H1 (cell line): ENCODE measurements at regions of chr17 and their contacts with region 1.

Region 1: GRCh38 chr17:16477255-16477654 is 14.7 kb downstream of the LRRC75A start:
- DNase-seq: no peak
- H3K4me3 ChIP-seq: no peak overlapping the region
- H3K27ac ChIP-seq: no peak overlapping the region
- H3K4me1 ChIP-seq: peaks cover 0 to 33% (median 9%) of the 10 kb centered on the region in 4 experiments; a peak in 5 of 7 replicates
- H3K27me3 ChIP-seq: no peaks in the 10 kb centered on the region
- CTCF ChIP-seq: no peak
- EP300 ChIP-seq: no peak
- POLR2A ChIP-seq: no peak
- RAD21 ChIP-seq: no peak

Region 2: GRCh38 chr17:16456742-16457316 is 20.4 kb before region 1 on chr17:
- CTCF ChIA-PET with region 1: interaction called, 124 read pairs
- POLR2A ChIA-PET with region 1: interaction called, 4 read pairs
- DNase-seq: no peak
- H3K4me3 ChIP-seq: no peak overlapping the region
- H3K27ac ChIP-seq: no peak overlapping the region
- H3K4me1 ChIP-seq: peaks cover 6 to 16% (median 12%) of the 10 kb centered on the region in 4 experiments
- H3K27me3 ChIP-seq: no peaks in the 10 kb centered on the region
- CTCF ChIP-seq: peak; percentile 37 to 42 (median 37)
- EP300 ChIP-seq: no peak
- POLR2A ChIP-seq: no peak
- RAD21 ChIP-seq: peak; percentile 53 to 65

Region 3: DNA sequence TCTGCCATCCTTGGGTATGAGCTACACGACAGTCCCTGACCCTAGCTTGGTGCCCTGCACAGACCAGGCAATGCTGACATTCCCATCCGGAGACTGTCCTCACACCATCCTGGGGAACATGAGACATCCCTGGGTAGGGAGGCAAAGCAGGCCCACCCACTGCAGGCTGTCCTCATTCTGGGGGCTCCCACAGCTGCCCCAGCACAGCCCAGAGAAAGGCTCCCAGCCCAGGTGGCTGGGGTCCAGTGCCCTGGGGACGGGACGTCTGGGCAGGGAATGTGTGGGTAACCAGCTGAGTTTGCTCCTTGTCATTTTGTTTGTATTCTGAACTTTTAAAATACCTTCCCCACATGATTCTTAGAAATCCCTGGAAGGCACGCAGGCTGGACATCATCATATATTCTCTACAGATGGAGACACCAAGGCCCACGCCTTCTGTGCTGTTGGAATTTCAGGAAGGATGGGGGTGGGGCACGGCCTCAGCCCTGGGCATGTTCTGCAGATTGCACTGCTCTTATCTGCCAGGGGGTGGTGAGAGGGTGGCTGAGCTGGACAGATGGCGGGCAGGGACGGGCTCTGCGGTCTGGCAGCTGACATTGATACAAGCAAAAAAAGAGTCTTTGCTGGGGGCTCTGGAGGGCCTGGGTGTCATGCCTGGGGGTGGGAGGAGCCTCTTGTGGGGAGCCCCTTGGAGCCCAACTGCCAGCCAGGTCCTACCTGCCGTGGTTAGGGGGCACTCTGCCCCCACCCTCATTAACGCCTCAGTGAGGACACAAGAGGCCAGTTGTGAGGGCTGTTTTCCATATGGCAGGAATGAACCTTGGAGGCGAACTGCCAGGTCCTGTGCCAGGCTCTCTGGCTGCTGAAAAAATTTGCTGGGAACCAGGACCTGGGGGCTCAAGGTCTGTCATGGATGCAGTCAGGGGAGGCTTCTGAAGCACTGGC is 13.6 kb before region 1 on chr17:
- CTCF ChIA-PET with region 1: interaction called, 30 read pairs
- POLR2A ChIA-PET with region 1: interaction called, 7 read pairs
- DNase-seq: no peak
- H3K4me3 ChIP-seq: no peak overlapping the region
- H3K27ac ChIP-seq: no peak overlapping the region
- H3K4me1 ChIP-seq: peaks cover 6 to 26% (median 10%) of the 10 kb centered on the region in 4 experiments
- H3K27me3 ChIP-seq: no peaks in the 10 kb centered on the region
- CTCF ChIP-seq: peak; percentile 40 to 60 (median 43); a peak in 3 of 4 replicates
- EP300 ChIP-seq: no peak
- POLR2A ChIP-seq: no peak
- RAD21 ChIP-seq: peak; percentile 24 to 52; a peak in 2 of 4 replicates

Region 4: DNA sequence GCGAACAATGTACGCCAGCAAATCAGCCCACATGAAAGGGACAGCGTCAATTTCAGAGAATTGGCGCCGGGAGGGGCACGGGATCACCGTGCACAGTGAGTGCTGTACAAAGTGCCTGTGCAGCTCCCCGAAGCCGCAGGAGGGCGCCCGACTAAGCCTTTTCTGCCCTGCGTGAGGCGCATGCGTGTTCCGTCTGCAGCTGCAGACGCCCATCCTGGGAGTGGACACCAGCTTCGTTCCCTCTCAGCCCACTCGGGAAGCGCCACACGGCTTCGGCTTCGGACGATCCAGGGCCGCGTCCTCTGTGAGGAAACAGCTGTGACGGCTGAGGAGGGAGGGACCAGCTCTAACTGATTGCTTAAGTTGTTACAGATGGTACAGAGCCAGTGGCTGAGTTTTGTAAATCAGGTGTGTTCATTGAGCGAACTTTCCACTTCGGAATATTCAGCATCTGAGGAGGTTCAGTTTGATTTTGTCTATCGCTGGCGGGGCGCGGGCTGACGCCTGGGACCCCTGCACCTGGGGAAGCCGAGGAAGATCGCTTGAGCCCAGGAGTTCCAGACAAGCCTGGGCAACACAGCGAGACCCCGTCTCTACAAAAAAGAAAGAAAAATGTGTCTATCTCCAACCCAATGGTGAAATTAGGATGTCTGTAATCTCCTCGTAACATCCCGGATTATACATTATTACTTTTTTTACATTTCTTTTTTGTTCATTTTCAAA is 107.2 kb after region 1 on chr17:
- CTCF ChIA-PET with region 1: no interaction called
- POLR2A ChIA-PET with region 1: no interaction called
- DNase-seq: peak; percentile 60 to 96
- H3K4me3 ChIP-seq: peak overlapping the region; percentile 21 to 58 (median 45); a peak in 6 of 8 replicates
- H3K27ac ChIP-seq: no peak overlapping the region
- H3K4me1 ChIP-seq: no peaks in the 10 kb centered on the region
- H3K27me3 ChIP-seq: peaks cover 2 to 15% (median 10%) of the 10 kb centered on the region in 4 experiments
- CTCF ChIP-seq: peak; percentile 93 to 98 (median 96)
- EP300 ChIP-seq: no peak
- POLR2A ChIP-seq: no peak
- RAD21 ChIP-seq: peak; percentile 61 to 73